ENCODE measurements at regions of chr18 and their contacts with region 1.

Region 1: DNA sequence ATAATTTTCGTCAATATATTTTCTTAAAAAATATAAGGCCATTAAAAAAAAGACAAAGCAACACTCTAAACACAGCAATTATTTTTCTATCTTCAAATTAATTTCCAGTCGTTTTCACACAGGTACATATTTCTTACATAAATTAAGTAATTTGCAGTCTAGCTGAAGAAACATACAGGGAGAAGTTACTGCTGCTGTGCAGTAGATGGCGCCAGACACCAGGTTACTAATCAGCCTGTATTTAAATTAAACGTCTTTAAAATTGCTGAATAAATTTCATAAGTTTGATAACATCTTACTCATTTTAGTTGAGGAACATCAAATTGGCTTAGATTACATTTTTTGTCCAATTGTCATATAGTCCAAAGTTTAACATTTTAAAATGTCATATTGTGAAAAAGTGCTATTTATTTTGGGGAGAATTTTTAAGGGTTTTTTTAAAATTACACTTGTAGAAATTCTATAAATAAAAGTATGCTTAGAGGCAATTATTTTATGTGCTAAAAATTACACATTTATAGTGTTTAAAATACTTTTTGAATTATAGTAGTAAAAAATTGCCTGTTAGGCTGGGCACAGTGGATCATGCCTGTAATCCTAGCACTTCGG is 88.4 kb downstream of the PMAIP1 start:
- DNase-seq: peak; percentile 46
- H3K4me3 ChIP-seq: no peak overlapping the region
- H3K27ac ChIP-seq: no peak overlapping the region
- H3K4me1 ChIP-seq: no peaks in the 10 kb centered on the region
- H3K27me3 ChIP-seq: peaks cover 14% of the 10 kb centered on the region
- CTCF ChIP-seq: peak; percentile 80 to 94 (median 83)
- EP300 ChIP-seq: no peak
- POLR2A ChIP-seq: no peak

Region 2: GRCh38 chr18:59837586-59837985 is 150.6 kb before region 1 on chr18:
- in situ Hi-C with region 1: loop called in 1 of 4 experiments (anchors 25 kb)
- intact Hi-C with region 1: no loop called
- DNase-seq: peak; percentile 31
- H3K4me3 ChIP-seq: no peak overlapping the region
- H3K27ac ChIP-seq: no peak overlapping the region
- H3K4me1 ChIP-seq: no peaks in the 10 kb centered on the region
- H3K27me3 ChIP-seq: no peaks in the 10 kb centered on the region
- CTCF ChIP-seq: peak; percentile 71 to 87 (median 84)
- EP300 ChIP-seq: no peak
- POLR2A ChIP-seq: no peak

Region 3: DNA sequence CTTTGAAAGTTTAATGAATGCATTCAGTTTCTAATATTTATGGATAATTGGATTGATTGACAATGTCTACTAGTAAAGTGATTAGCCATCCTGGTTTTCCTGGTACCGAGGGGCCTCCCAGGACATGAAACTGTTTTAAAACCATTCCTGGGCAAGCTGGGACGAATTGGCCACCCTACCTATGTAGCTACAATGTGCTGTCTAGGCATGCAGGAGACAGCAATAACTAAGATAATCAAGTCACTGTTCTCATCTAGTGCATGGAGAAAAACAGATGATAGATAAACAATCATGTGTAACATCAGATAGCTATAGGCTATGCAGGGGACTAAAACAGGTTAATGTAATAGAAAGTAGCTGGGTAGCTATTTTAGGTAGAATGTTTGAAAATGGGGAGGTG is 21.3 kb before region 1 on chr18:
- in situ Hi-C with region 1: no loop called
- intact Hi-C with region 1: no loop called
- DNase-seq: no peak
- H3K4me3 ChIP-seq: no peak overlapping the region
- H3K27ac ChIP-seq: no peak overlapping the region
- H3K4me1 ChIP-seq: no peaks in the 10 kb centered on the region
- H3K27me3 ChIP-seq: peaks cover 7% of the 10 kb centered on the region
- CTCF ChIP-seq: no peak
- EP300 ChIP-seq: no peak
- POLR2A ChIP-seq: no peak

Region 4: DNA sequence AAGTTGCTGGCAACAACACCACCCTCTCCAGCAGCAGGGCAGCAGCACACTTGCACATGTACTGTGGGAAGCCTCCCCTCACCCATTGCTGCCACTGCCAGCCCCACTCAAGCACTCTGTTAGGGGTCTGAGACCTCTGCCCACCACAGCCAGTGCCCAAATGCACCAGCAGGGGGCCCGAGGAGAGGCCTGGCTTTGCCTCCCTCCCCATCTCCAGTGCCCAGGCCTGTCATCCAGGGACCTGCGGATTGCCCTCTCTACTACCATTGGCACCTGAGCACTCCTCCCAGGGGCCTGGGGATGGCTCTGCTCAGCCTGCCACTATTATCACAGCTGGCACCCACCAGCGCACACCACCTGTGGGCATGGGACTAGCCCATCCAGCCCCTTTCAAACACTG is 87.3 kb after region 1 on chr18:
- in situ Hi-C with region 1: no loop called
- intact Hi-C with region 1: no loop called
- DNase-seq: no peak
- H3K4me3 ChIP-seq: no peak overlapping the region
- H3K27ac ChIP-seq: no peak overlapping the region
- H3K4me1 ChIP-seq: no peaks in the 10 kb centered on the region
- H3K27me3 ChIP-seq: no peaks in the 10 kb centered on the region
- CTCF ChIP-seq: no peak
- EP300 ChIP-seq: no peak
- POLR2A ChIP-seq: no peak

Region 5: DNA sequence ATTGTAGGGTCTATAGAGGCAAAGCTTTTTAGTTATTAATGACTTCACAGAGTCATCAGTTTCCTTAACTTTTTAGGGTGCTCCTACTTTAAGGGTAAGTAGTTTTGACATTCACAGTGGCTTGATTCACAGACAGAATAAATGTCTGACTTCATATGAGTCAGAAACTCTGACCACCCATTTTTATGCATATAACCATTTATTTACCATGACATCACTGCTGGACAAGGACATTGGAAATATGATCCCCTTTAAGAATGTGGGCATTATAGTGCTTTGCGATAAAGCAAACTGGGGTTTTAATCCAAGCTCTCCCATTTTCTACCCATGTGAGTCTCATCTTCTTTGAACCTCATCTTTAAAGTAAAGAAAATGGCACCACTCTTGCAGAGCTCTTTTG is 546.3 kb after region 1 on chr18:
- in situ Hi-C with region 1: loop called in 3 of 4 experiments (anchors 10 to 25 kb)
- intact Hi-C with region 1: no loop called
- DNase-seq: no peak
- H3K4me3 ChIP-seq: no peak overlapping the region
- H3K27ac ChIP-seq: no peak overlapping the region
- H3K4me1 ChIP-seq: no peaks in the 10 kb centered on the region
- H3K27me3 ChIP-seq: no peaks in the 10 kb centered on the region
- CTCF ChIP-seq: no peak
- EP300 ChIP-seq: no peak
- POLR2A ChIP-seq: no peak

Region 6: GRCh38 chr18:60549338-60549960 is 561.2 kb after region 1 on chr18:
- in situ Hi-C with region 1: loop called in 3 of 4 experiments (anchors 10 to 25 kb)
- intact Hi-C with region 1: loop called (anchors 10 kb)
- DNase-seq: no peak
- H3K4me3 ChIP-seq: no peak overlapping the region
- H3K27ac ChIP-seq: no peak overlapping the region
- H3K4me1 ChIP-seq: no peaks in the 10 kb centered on the region
- H3K27me3 ChIP-seq: no peaks in the 10 kb centered on the region
- CTCF ChIP-seq: peak; percentile 56 to 70 (median 62)
- EP300 ChIP-seq: no peak
- POLR2A ChIP-seq: no peak

Region 7: GRCh38 chr18:60554967-60555366 is 566.8 kb after region 1 on chr18:
- in situ Hi-C with region 1: loop called in 1 of 4 experiments (anchors 10 kb)
- intact Hi-C with region 1: no loop called
- DNase-seq: no peak
- H3K4me3 ChIP-seq: no peak overlapping the region
- H3K27ac ChIP-seq: no peak overlapping the region
- H3K4me1 ChIP-seq: no peaks in the 10 kb centered on the region
- H3K27me3 ChIP-seq: no peaks in the 10 kb centered on the region
- CTCF ChIP-seq: no peak
- EP300 ChIP-seq: no peak
- POLR2A ChIP-seq: no peak

Region 8: DNA sequence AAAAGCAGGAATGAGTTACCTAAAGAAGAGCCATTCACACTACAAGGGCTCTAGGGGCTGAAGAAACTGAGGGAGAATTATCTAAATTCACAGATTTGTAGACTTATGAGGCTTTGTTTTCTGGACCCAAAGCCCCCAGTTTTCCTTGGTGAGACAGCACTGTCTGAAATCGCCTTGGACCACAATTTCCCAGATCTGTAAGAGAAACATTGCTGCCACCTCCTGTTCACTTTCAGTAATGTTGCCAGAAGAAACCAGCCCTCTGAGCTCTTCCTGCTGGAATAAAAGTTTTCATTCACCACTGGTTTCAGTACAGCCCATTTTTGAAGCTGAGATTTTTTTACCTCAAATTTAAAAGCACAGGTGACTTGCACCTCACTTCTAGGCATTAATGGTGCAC is 1514.3 kb after region 1 on chr18:
- in situ Hi-C with region 1: no loop called
- intact Hi-C with region 1: loop called (anchors 5 kb)
- DNase-seq: peak; percentile 17
- H3K4me3 ChIP-seq: no peak overlapping the region
- H3K27ac ChIP-seq: no peak overlapping the region
- H3K4me1 ChIP-seq: no peaks in the 10 kb centered on the region
- H3K27me3 ChIP-seq: no peaks in the 10 kb centered on the region
- CTCF ChIP-seq: peak; percentile 53 to 68 (median 63)
- EP300 ChIP-seq: no peak
- POLR2A ChIP-seq: no peak

Measured in transverse colon (tissue), 4 donors.